ENCODE measurements at regions of chr11 and their contacts with region 1.

Region 1: DNA sequence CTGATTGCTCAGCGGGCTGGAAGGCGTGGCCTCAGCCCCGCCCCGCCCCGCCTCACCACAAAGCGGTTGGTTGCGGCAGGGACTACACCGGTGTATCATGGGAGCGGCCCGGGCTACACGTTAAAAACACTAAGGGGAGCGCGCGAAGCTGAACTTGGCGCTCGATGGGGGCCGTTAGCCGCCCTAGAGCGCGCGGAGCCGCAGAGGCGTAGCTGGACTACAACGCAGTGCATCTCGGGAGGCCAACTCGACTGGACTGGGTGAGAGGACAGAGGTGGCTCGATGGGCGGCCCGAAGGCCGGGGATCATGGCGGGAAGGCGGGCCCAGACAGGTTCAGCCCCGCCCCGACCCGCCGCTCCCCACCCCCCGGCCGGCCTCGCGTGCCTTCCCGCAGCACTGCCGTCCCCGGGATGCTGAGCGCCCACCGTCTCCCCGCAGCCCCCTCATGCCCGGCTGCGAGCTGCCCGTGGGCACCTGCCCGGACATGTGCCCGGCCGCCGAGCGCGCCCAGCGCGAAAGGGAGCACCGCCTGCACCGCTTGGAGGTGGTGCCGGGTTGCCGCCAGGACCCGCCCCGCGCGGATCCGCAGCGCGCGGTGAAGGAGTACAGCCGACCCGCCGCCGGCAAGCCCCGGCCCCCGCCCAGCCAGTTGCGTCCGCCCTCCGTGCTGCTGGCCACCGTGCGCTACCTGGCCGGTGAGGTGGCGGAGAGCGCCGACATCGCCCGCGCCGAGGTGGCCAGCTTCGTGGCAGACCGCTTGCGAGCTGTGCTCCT is at the start of gene SAC3D1:
- DNase-seq: peak; percentile 98
- ATAC-seq: peak; percentile 95
- H3K4me3 Mint-ChIP-seq: peak within 1 kb of the TSS; percentile 84
- H3K27ac Mint-ChIP-seq: peak within 1 kb of the TSS; percentile 97
- H3K4me1 Mint-ChIP-seq: peaks cover 34% of the 10 kb centered on the region
- H3K27me3 Mint-ChIP-seq: no peaks in the 10 kb centered on the region
- total RNA-seq, gene SAC3D1: 24.3 to 27.2 TPM

Region 2: GRCh38 chr11:64971421-64972233 is 69.4 kb before region 1 on chr11 and contains the start of gene MAJIN:
- CTCF ChIA-PET with region 1: no interaction called
- DNase-seq: peak; percentile 88
- ATAC-seq: peak; percentile 80
- H3K4me3 Mint-ChIP-seq: peak within 1 kb of the TSS; percentile 56
- H3K27ac Mint-ChIP-seq: peak within 1 kb of the TSS; percentile 59
- H3K4me1 Mint-ChIP-seq: peaks cover 37% of the 10 kb centered on the region
- H3K27me3 Mint-ChIP-seq: no peaks in the 10 kb centered on the region
- total RNA-seq, gene MAJIN: not detected

Region 3: DNA sequence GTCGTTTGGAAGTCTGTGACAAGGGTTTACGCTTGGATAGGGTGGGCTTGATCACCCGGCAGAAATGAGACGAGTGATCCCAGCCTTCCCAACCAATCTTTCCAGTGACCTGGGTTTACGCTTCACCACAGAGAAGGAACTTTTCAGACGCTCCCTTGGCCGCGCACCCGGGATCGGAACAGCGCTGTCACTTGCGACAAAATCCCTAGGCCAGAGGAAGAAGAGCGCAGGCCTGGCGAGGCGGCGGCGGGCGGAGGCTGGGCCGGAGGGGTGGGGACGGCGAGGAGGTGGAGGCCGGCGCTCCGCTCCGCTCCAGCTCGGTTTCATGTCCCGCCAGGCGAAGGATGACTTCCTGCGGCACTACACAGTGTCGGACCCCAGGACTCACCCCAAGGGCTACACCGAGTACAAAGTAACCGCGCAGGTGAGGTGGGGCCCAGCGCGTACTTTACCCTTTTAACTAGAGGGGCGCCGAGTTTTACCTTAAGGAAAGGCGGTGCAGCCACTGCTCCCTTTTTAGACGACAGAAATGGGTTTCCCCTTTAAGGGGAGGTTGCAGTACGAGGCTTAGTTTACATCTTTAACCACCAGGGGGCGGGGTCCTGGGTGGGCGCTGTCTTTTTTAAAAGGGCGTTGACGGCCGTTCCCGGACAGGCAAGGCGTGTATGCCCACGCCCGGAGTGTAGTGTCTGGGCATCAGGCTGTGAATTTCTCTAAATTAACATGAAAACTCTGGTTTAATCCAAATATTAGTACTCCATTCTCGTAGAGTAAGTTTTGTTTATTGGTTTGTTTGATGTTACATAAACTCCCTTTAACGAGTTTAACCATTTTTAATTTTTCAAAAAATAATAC is 13.6 kb before region 1 on chr11 and contains the start of gene SNX15:
- CTCF ChIA-PET with region 1: interaction called, 10 read pairs
- DNase-seq: peak; percentile 96
- ATAC-seq: peak; percentile 94
- H3K4me3 Mint-ChIP-seq: peak within 1 kb of the TSS; percentile 69
- H3K27ac Mint-ChIP-seq: peak within 1 kb of the TSS; percentile 86
- H3K4me1 Mint-ChIP-seq: peaks cover 22% of the 10 kb centered on the region
- H3K27me3 Mint-ChIP-seq: no peaks in the 10 kb centered on the region
- total RNA-seq, gene SNX15: 18.9 to 29.2 TPM

Region 4: GRCh38 chr11:65053827-65054508 is 12.9 kb after region 1 on chr11:
- CTCF ChIA-PET with region 1: no interaction called
- DNase-seq: no peak
- ATAC-seq: no peak
- H3K4me3 Mint-ChIP-seq: no peak overlapping the region
- H3K27ac Mint-ChIP-seq: no peak overlapping the region
- H3K4me1 Mint-ChIP-seq: peaks cover 23% of the 10 kb centered on the region
- H3K27me3 Mint-ChIP-seq: no peaks in the 10 kb centered on the region

Region 5: DNA sequence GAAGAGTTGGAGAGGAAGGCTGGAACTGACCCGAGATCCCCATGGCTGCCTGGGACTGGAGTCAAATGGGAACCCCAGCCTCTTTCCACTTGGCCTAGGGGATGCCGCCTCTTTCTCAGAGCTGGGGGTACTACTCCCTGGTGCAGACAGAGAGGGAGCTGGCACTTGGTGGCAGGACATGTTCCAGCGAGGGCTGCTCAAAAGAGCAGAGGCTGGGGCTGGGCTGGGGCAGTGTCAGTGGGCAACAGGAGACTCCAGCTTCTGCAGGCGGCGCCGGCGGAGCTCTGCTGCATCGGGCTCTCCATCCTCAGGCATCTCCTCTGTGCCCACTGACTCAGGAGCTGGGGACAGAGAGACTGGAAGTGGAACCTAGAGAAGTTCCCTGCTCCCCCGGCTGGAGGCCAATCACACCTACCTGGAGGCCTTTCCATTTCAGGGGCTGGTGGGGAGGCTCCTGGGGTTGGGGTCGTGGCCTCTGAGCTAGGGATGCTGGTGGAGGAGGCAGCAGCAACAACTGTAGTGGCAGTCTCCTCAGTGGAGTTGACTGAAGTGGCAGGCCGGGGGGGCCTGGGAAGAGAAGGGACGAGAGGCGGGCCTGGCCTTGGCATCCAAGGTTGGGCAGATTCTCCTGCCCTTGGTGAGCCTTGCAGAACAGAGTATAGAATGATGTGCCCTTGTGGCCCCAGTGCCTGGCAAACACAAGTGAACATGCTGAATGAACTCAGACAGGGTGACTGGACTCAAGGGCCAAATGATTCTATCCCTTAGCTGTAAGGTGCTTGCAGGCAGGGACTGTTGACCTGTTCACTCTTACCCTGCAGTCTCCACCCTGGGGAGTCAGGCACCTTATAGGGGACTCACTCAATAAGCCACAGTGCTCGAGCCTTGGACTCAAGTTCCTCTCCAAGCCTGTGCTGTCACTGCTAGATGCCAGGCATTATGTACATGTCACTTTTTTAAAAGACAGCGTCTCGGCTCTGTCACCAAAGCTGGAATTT is 87.4 kb after region 1 on chr11:
- CTCF ChIA-PET with region 1: no interaction called
- DNase-seq: no peak
- ATAC-seq: no peak
- H3K4me3 Mint-ChIP-seq: no peak overlapping the region
- H3K27ac Mint-ChIP-seq: no peak overlapping the region
- H3K4me1 Mint-ChIP-seq: peaks cover 23% of the 10 kb centered on the region
- H3K27me3 Mint-ChIP-seq: no peaks in the 10 kb centered on the region

Measured in activated CD8-positive, alpha-beta memory T cell treated with anti-CD3 and anti-CD28 coated beads, Interleukin-2, amount 10 ng/mL, durations not matched to agents 7 days and 5 days (primary cell).